ENCODE measurements at regions of chr7 and their contacts with region 1.

Region 1: DNA sequence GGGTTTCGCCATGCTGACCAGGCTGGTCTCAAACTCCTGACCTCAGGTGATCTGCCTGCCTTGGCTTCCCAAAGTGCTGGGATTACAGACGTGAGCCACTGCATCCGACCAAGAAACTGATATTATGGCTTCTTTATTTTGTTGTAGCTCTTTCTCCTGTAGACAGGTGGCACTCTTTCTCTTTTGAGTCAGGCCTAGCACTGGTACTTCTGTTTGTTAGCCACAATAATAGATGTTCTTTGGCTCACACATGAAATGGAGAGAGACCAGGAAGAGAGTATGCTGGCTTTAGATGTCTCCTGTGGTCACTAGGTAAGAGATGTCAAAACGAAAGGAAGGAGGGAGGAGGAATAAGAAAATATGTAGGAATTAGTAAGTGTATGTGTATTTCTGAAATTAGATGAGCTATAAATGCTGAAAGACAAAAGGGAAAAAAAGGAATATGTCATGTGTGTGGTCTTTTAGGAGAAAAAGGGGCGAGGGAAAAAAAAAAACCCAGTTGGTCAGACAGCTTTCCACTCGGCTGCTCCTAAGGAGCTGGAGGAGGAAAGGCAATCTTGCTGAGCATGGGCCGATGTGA is 78.7 kb downstream of the CLEC2L start:
- DNase-seq: no peak
- ATAC-seq: peak; percentile 83
- H3K4me3 Mint-ChIP-seq: no peak overlapping the region
- H3K27ac Mint-ChIP-seq: no peak overlapping the region
- H3K4me1 Mint-ChIP-seq: no peaks in the 10 kb centered on the region
- H3K27me3 Mint-ChIP-seq: no peaks in the 10 kb centered on the region
- CTCF ChIP-seq: peak; percentile 53

Region 2: DNA sequence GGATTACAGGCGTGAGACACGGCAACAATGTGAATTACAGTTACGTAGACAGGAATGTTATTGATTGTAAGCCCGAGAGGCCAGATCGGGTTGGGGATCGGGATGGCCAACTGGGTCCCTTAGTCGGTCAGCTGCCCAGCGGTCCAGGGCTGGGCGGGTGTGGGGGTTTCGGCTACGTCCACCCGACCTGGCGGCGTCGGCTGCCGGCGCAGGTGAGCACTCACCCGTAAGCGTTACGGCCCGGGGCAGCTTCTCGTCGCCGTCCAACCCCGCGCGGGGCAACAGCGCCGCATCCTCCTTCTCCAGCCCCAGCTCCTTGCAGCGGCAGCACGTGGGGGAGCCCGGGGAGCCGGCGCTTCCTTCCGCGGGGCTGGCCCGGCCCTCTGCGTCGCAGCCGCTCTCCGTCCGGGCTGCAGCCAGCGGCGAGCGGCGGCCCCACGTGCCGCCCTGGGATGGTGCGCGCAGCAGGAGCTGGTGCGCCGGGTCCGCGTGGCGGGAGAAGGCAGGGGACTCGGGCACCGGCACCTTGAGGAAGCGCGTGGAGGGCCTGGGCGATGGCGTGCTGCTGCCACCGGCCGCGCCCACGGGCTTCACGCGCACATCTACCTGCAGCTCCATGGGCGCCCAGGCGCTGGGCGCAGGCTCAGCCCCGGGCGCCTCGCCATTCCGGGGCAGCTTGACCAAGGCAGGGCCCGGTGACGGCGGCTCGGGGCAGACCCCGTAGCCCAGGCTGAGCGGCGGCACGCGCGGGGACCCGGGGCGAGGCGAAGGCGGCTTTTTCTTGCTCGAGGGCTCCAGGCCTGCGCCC is 119.4 kb before region 1 on chr7:
- CTCF ChIA-PET with region 1: interaction called, 13 read pairs
- POLR2A ChIA-PET with region 1: no interaction called
- DNase-seq: peak; percentile 64
- ATAC-seq: peak; percentile 10
- H3K4me3 Mint-ChIP-seq: peak overlapping the region; percentile 73
- H3K27ac Mint-ChIP-seq: no peak overlapping the region
- H3K4me1 Mint-ChIP-seq: peaks cover 12% of the 10 kb centered on the region
- H3K27me3 Mint-ChIP-seq: peaks cover 28% of the 10 kb centered on the region
- CTCF ChIP-seq: no peak

Region 3: GRCh38 chr7:139588632-139589031 is 13.6 kb before region 1 on chr7:
- CTCF ChIA-PET with region 1: interaction called, 28 read pairs
- POLR2A ChIA-PET with region 1: interaction called, 3 read pairs
- DNase-seq: no peak
- ATAC-seq: peak; percentile 63
- H3K4me3 Mint-ChIP-seq: no peak overlapping the region
- H3K27ac Mint-ChIP-seq: no peak overlapping the region
- H3K4me1 Mint-ChIP-seq: peaks cover 3% of the 10 kb centered on the region; the same call in 1 of the 2 replicates
- H3K27me3 Mint-ChIP-seq: no peaks in the 10 kb centered on the region
- CTCF ChIP-seq: no peak

Region 4: GRCh38 chr7:139613971-139614411 is 11.8 kb after region 1 on chr7:
- CTCF ChIA-PET with region 1: interaction called, 37 read pairs
- POLR2A ChIA-PET with region 1: interaction called, 3 read pairs
- DNase-seq: peak; percentile 45
- ATAC-seq: peak; percentile 91
- H3K4me3 Mint-ChIP-seq: no peak overlapping the region
- H3K27ac Mint-ChIP-seq: peak overlapping the region; percentile 97
- H3K4me1 Mint-ChIP-seq: peaks cover 20% of the 10 kb centered on the region
- H3K27me3 Mint-ChIP-seq: no peaks in the 10 kb centered on the region
- CTCF ChIP-seq: no peak

Region 5: DNA sequence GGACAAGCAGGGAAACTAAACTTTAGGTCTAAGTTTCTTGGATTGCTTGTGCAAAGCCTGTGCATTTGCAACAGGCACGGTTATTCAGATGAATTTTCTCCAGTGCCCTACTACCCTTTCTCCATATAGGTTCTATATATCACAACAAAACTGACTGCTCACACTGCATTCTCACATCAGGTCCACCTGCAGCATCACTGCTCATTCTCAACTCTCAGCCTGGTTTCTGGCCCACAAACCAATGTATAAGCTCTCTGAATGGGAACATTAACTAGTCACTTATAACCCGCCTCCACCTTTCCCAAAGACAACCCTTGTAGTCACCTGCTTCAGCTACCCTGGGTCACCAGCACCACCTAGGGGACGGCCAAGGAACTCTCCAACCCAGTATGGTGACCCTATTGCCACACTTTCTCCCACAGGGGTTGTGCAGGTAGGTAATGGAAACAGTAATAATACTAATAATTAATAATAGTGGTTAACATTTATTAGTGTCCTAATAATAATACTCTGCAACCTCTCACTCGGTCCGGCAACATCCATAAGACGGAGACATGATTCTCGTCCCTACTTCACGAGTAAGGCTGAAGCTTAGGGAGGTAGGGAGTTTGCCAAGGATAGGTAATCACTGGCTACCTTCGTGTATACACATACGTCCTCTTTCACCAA is 18.6 kb after region 1 on chr7:
- CTCF ChIA-PET with region 1: interaction called, 37 read pairs
- POLR2A ChIA-PET with region 1: interaction called, 3 read pairs
- DNase-seq: peak; percentile 84
- ATAC-seq: peak; percentile 97
- H3K4me3 Mint-ChIP-seq: no peak overlapping the region
- H3K27ac Mint-ChIP-seq: no peak overlapping the region; the same call in 1 of the 2 replicates
- H3K4me1 Mint-ChIP-seq: no peaks in the 10 kb centered on the region
- H3K27me3 Mint-ChIP-seq: no peaks in the 10 kb centered on the region
- CTCF ChIP-seq: peak; percentile 67

Region 6: GRCh38 chr7:140003913-140004382 is 401.7 kb after region 1 on chr7:
- CTCF ChIA-PET with region 1: interaction called, 19 read pairs
- POLR2A ChIA-PET with region 1: no interaction called
- DNase-seq: peak; percentile 49
- ATAC-seq: peak; percentile 46
- H3K4me3 Mint-ChIP-seq: no peak overlapping the region
- H3K27ac Mint-ChIP-seq: peak overlapping the region; percentile 91
- H3K4me1 Mint-ChIP-seq: peaks cover 16% of the 10 kb centered on the region
- H3K27me3 Mint-ChIP-seq: no peaks in the 10 kb centered on the region
- CTCF ChIP-seq: peak; percentile 46; the same call in 1 of the 2 replicates